AG04450 (cell line): ENCODE measurements at regions of chr22 and their contacts with region 1.

Region 1: GRCh38 chr22:35317680-35318290 is 18.1 kb downstream of the TOM1 start:
- DNase-seq: no peak
- H3K4me3 ChIP-seq: no peak overlapping the region
- H3K27ac ChIP-seq: no peak overlapping the region
- H3K27me3 ChIP-seq: no peaks in the 10 kb centered on the region
- CTCF ChIP-seq: no peak

Region 2: DNA sequence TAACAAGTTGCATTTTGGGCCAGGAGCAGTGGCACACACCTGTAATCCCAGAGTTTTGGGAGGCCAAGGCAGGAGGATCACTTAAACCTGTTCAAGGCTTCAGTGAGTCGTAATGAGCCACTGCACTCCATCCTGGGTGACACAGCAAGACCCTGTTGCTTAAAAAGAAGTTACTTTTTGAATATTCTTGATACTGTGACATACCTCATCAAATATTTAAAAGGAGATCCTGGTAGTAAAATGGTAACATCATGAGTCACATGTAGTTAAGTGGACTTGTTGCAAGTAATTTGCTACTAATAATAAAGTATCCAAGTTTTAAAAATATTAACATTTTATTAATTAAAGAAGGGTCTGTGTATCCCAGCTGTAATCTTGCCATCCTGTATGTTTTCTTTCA is 42.2 kb before region 1 on chr22:
- CTCF ChIA-PET with region 1: no interaction called
- POLR2A ChIA-PET with region 1: interaction called, 10 read pairs
- DNase-seq: no peak
- H3K4me3 ChIP-seq: no peak overlapping the region
- H3K27ac ChIP-seq: no peak overlapping the region
- H3K27me3 ChIP-seq: no peaks in the 10 kb centered on the region
- CTCF ChIP-seq: no peak